ENCODE measurements at regions of chr1 and their contacts with region 1.

Region 1: DNA sequence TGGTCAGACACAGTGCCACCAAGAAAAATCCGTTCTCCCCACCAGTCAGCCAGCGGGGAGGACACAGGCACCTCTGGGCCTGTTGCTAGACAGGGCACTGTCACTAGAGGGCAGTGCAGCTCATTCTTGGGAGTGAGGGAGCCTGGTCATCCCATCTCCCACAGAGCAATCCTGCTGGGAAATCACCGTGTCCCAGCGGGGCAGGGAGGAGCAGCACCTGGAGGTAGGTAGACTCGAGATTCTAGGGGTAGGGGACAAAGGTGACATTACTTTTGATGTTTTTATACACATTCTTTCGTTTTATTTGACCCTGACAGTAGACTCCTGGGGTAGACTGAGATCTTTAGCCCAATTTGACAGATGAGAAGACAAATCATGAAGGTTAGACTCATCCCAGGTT is 6.7 kb upstream of the CAMK1G start:
- DNase-seq: peak; percentile 80
- H3K4me3 ChIP-seq: no peak overlapping the region
- H3K27ac ChIP-seq: no peak overlapping the region
- H3K4me1 ChIP-seq: no peaks in the 10 kb centered on the region; the same call in 1 of the 2 replicates
- H3K27me3 ChIP-seq: peaks cover 11% of the 10 kb centered on the region

Region 2: DNA sequence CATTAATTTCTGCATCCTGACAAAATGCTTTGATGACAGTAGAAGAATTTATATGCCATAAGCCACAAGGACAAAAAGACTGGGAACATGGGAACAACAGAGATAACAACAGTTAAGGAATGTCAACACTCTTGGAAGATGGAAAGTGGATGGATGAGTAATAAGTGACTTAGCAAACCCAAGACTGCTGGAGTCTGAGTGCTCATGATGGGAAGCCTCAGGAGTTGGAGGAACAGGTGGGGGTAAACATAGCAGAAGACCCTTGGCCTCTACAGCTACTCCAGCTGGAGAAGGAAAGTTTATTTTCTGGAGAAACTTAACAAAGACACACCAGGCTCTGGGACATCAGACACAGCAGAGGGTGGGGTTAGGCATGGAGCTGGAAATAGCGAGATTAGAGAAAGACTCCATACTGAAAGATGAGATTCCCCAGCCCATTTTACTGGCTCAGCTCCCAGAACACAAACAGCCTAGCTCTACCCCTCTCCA is 112.0 kb after region 1 on chr1:
- in situ Hi-C with region 1: loop called (anchors 5 kb)
- DNase-seq: peak; percentile 40
- H3K4me3 ChIP-seq: no peak overlapping the region
- H3K27ac ChIP-seq: no peak overlapping the region
- H3K4me1 ChIP-seq: no peaks in the 10 kb centered on the region
- H3K27me3 ChIP-seq: peaks cover 35% of the 10 kb centered on the region

Region 3: DNA sequence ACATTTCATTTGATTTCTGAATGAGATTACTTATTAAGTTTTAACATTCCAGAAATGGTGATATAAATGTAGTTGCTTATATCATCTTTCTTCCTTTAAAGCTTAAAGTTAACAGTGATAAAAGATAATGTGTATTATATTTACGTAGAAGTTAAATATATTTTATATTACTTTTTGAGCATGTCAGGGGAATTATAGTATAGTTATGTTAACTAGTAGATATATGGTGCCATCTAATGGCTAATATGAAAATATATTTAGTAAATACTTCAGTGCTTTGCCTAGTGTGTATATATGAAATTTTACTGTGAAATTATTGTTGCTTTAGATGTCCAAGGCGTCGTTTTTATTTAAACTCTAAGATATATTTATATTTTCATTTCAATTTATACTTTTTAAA is 412.7 kb after region 1 on chr1:
- in situ Hi-C with region 1: loop called (anchors 25 kb)
- DNase-seq: peak; percentile 64
- H3K4me3 ChIP-seq: no peak overlapping the region
- H3K27ac ChIP-seq: no peak overlapping the region
- H3K4me1 ChIP-seq: no peaks in the 10 kb centered on the region
- H3K27me3 ChIP-seq: no peaks in the 10 kb centered on the region